ENCODE measurements at regions of chr6 and their contacts with region 1.

Region 1: DNA sequence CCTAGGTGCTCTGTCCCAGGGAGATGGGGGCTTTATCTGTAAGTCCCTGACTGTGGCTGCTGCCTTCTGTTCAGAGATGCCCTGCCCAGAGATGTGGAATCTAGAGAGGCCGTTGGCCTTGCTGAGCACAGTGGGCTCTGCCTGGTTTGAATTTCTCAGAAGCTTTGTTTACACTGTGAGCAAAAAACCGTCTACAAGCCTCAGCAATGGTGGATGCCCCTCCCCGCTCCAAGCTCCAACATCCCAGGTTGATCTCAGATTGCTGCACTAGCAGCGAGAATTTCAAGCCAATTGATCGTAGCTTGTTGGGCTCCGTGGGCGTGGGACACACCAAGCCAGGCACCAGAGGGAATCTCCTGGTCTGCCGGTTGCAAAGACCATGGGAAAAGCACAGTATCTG is 16.3 kb upstream of the RPP40 start:
- DNase-seq: no peak
- ATAC-seq: no peak
- H3K4me3 ChIP-seq: no peak overlapping the region
- H3K27ac ChIP-seq: no peak overlapping the region
- H3K4me1 ChIP-seq: no peaks in the 10 kb centered on the region
- CTCF ChIP-seq: no peak
- EP300 ChIP-seq: no peak
- POLR2A ChIP-seq: no peak
- RAD21 ChIP-seq: no peak

Region 2: DNA sequence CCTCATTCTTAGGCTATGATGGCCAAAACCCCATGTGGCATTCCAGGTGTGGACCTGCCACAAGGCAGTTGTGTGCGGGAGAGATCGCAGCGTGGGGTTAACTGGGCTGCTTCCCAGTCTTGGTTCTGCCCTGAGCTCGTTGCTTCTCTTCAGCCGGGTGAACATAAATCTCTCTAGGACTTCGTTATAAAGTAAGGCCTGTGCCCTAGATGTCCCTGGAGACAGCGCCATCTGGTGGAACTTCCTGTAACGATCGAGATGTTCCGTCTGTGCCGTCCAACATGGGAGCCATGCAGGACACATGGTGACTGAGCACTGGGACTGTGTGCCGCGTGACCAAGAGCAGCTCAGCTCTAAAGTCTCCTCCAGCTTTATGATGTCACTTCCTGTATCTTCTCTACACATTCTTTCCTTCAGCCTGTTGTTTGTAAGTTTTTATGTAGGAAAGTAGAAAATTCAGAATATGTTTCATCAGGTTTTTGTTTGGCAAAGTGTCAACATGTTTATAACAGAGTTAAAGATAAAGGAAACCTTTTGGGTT is 10.5 kb after region 1 on chr6:
- CTCF ChIA-PET with region 1: interaction called, 11 read pairs
- POLR2A ChIA-PET with region 1: no interaction called
- DNase-seq: peak; percentile 37 to 84
- ATAC-seq: peak; percentile 53 to 87; a peak in 4 of 6 replicates
- H3K4me3 ChIP-seq: no peak overlapping the region
- H3K27ac ChIP-seq: peak overlapping the region in 1 of 2 experiments; percentile 41; a peak in 1 of 6 replicates
- H3K4me1 ChIP-seq: peaks cover 6% of the 10 kb centered on the region; the same call in 1 of the 3 replicates
- CTCF ChIP-seq: peak; percentile 30; the same call in 2 of the 3 replicates
- EP300 ChIP-seq: no peak
- POLR2A ChIP-seq: no peak
- RAD21 ChIP-seq: peak; percentile 45 to 59; a peak in 4 of 5 replicates

Measured in A549 (cell line).